ENCODE measurements at regions of chr17 and their contacts with region 1.

Region 1: GRCh38 chr17:21275579-21276263 is 8.8 kb upstream of the MAP2K3 start:
- DNase-seq: peak; percentile 85 to 93 (median 87)
- H3K4me3 ChIP-seq: peak overlapping the region; percentile 26 to 71
- H3K4me3 Mint-ChIP-seq: peak overlapping the region; percentile 86 to 99 (median 90)
- H3K27ac ChIP-seq: peak overlapping the region; percentile 77
- H3K27ac Mint-ChIP-seq: peak overlapping the region; percentile 78 to 95 (median 93)
- H3K4me1 ChIP-seq: peaks cover 49% of the 10 kb centered on the region
- H3K4me1 Mint-ChIP-seq: peaks cover 32 to 52% (median 39%) of the 10 kb centered on the region in 4 donors
- H3K27me3 ChIP-seq: no peaks in the 10 kb centered on the region
- H3K27me3 Mint-ChIP-seq: no peaks in the 10 kb centered on the region

Region 2: DNA sequence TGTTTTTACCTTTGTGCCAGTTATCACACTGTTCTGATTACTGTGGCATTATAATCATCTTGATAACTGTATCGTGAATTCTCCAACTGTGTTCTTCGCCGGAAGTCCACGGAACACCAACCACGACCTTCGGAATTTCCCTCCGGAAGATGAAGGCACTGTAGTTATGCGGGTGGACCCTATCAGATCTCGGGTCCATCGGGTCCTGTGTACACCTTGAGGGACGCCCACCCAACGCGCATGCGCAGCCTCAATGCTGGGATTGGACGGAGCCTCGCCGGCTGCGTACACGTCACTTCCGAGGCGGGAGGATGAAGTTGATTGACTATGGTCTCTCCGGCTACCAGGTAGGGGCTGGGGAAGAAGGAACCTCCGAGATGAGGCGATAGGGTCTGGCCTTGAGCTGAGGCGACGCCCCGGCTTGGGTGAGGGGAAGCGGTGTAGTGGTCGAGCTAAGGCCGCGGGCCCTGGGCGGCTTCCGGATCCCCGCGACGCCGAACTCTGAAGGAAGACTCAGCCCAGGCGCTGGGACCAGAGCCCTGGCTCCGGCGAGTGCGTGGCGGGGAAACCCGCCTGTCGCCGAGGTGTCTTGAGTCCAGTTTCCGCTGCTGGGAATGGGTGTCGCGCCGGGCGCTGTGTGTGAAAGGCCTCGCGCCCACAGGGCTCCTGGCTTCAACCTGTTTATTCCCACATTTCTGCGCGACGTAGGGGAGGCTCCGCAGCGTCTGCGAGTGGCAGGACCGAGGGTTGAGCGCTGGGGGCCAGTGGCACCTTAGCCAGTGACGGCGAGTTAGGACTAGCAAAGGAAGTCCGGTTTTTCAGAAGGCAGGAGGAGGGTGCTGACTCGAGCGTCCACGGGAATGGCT is 148.8 kb before region 1 on chr17 and contains the start of gene DHRS7B:
- CTCF ChIA-PET with region 1: interaction called, 69 read pairs
- POLR2A ChIA-PET with region 1: interaction called, 3 read pairs
- intact Hi-C with region 1: loop called (anchors 1 kb)
- DNase-seq: peak; percentile 94 to 97 (median 94)
- H3K4me3 ChIP-seq: peak within 1 kb of the TSS; percentile 31 to 97
- H3K4me3 Mint-ChIP-seq: peak within 1 kb of the TSS; percentile 91 to 98 (median 96)
- H3K27ac ChIP-seq: peak within 1 kb of the TSS; percentile 85
- H3K27ac Mint-ChIP-seq: peak within 1 kb of the TSS; percentile 95 to 99 (median 97)
- H3K4me1 ChIP-seq: peaks cover 27% of the 10 kb centered on the region
- H3K4me1 Mint-ChIP-seq: peaks cover 20 to 42% (median 35%) of the 10 kb centered on the region in 4 donors
- H3K27me3 ChIP-seq: no peaks in the 10 kb centered on the region
- H3K27me3 Mint-ChIP-seq: no peaks in the 10 kb centered on the region
- total RNA-seq, gene DHRS7B: 8.2 to 9.5 TPM

Region 3: GRCh38 chr17:21161498-21162393 is 114.0 kb before region 1 on chr17:
- CTCF ChIA-PET with region 1: no interaction called
- POLR2A ChIA-PET with region 1: no interaction called
- intact Hi-C with region 1: no loop called
- DNase-seq: no peak
- H3K4me3 ChIP-seq: no peak overlapping the region
- H3K4me3 Mint-ChIP-seq: no peak overlapping the region
- H3K27ac ChIP-seq: no peak overlapping the region
- H3K27ac Mint-ChIP-seq: peak overlapping the region in 1 of 7 donors; percentile 69
- H3K4me1 ChIP-seq: no peaks in the 10 kb centered on the region
- H3K4me1 Mint-ChIP-seq: peaks cover 0 to 12% (median 4%) of the 10 kb centered on the region in 4 donors
- H3K27me3 ChIP-seq: no peaks in the 10 kb centered on the region
- H3K27me3 Mint-ChIP-seq: no peaks in the 10 kb centered on the region

Region 4: GRCh38 chr17:21214015-21214776 is 61.5 kb before region 1 on chr17 and contains the start of gene TMEM11:
- CTCF ChIA-PET with region 1: interaction called, 13 read pairs
- POLR2A ChIA-PET with region 1: interaction called, 17 read pairs
- intact Hi-C with region 1: loop called (anchors 1 kb)
- DNase-seq: peak; percentile 94 to 96 (median 95)
- H3K4me3 ChIP-seq: peak within 1 kb of the TSS; percentile 64 to 94
- H3K4me3 Mint-ChIP-seq: peak within 1 kb of the TSS; percentile 89 to 97 (median 92)
- H3K27ac ChIP-seq: peak within 1 kb of the TSS; percentile 92
- H3K27ac Mint-ChIP-seq: peak within 1 kb of the TSS; percentile 82 to 96 (median 93)
- H3K4me1 ChIP-seq: peaks cover 39% of the 10 kb centered on the region
- H3K4me1 Mint-ChIP-seq: peaks cover 31 to 64% (median 47%) of the 10 kb centered on the region in 4 donors
- H3K27me3 ChIP-seq: no peaks in the 10 kb centered on the region
- H3K27me3 Mint-ChIP-seq: no peaks in the 10 kb centered on the region
- total RNA-seq, gene TMEM11: 18.6 to 21.7 TPM

Region 5: DNA sequence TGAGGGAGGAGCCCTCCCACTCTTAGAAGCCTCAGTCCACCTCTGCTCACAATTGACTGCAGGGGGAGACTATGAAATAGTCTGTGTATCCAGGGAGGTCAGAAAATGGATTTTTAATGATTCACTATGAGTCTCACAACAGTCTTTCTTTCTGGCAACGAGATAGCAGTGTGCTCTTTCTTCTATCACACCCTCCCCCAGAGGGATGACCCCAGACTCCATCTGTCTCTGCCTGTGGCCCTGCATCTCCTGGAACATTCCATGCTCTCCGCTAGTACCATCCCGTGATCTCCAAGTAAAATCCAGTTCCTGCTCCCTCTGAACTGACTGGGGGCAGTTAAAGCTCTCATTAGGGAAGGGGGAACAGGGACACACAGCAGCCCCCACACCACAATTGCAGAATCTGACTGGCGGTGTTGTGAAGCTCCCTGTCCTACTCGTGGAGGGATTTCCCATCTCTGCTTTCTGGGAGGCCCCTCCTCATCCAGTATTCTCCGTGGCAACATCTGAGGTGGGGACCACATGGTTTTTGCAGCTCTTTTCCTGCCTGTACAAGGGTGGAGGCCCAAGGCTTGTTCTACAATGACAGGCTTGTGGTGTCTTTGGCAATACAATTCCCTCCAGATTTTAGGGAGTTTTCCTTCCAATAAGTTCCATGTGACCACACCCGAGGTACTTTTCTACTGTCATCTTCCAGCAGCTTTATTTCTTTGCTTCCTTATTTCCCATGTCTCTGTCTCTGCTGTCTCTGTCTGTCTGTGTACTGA is 42.0 kb before region 1 on chr17:
- CTCF ChIA-PET with region 1: no interaction called
- POLR2A ChIA-PET with region 1: no interaction called
- intact Hi-C with region 1: no loop called
- DNase-seq: no peak
- H3K4me3 ChIP-seq: no peak overlapping the region
- H3K4me3 Mint-ChIP-seq: peak overlapping the region in 1 of 8 donors; percentile 45
- H3K27ac ChIP-seq: no peak overlapping the region
- H3K27ac Mint-ChIP-seq: peak overlapping the region in 1 of 7 donors; percentile 73
- H3K4me1 ChIP-seq: no peaks in the 10 kb centered on the region
- H3K4me1 Mint-ChIP-seq: peaks cover 0 to 1% (median 0%) of the 10 kb centered on the region in 4 donors
- H3K27me3 ChIP-seq: no peaks in the 10 kb centered on the region
- H3K27me3 Mint-ChIP-seq: no peaks in the 10 kb centered on the region

Region 6: GRCh38 chr17:21252796-21253645 is 22.7 kb before region 1 on chr17 and contains the start of gene NATD1:
- CTCF ChIA-PET with region 1: interaction called, 25 read pairs
- POLR2A ChIA-PET with region 1: interaction called, 48 read pairs
- intact Hi-C with region 1: loop called (anchors 1 kb)
- DNase-seq: peak; percentile 74 to 86 (median 80)
- H3K4me3 ChIP-seq: peak within 1 kb of the TSS; percentile 38 to 71
- H3K4me3 Mint-ChIP-seq: peak within 1 kb of the TSS; percentile 88 to 95 (median 90)
- H3K27ac ChIP-seq: peak within 1 kb of the TSS; percentile 62
- H3K27ac Mint-ChIP-seq: peak within 1 kb of the TSS; percentile 90 to 95 (median 91)
- H3K4me1 ChIP-seq: peaks cover 27% of the 10 kb centered on the region
- H3K4me1 Mint-ChIP-seq: peaks cover 24 to 59% (median 34%) of the 10 kb centered on the region in 4 donors
- H3K27me3 ChIP-seq: no peaks in the 10 kb centered on the region
- H3K27me3 Mint-ChIP-seq: no peaks in the 10 kb centered on the region
- total RNA-seq, gene NATD1: 13.1 to 13.5 TPM

Region 7: GRCh38 chr17:21263351-21263750 is 12.4 kb before region 1 on chr17:
- CTCF ChIA-PET with region 1: interaction called, 24 read pairs
- POLR2A ChIA-PET with region 1: interaction called, 10 read pairs
- intact Hi-C with region 1: no loop called
- DNase-seq: no peak
- H3K4me3 ChIP-seq: no peak overlapping the region
- H3K4me3 Mint-ChIP-seq: no peak overlapping the region
- H3K27ac ChIP-seq: no peak overlapping the region
- H3K27ac Mint-ChIP-seq: peak overlapping the region in 1 of 7 donors; percentile 4
- H3K4me1 ChIP-seq: peaks cover 17% of the 10 kb centered on the region
- H3K4me1 Mint-ChIP-seq: peaks cover 8 to 27% (median 14%) of the 10 kb centered on the region in 4 donors
- H3K27me3 ChIP-seq: no peaks in the 10 kb centered on the region
- H3K27me3 Mint-ChIP-seq: peaks cover 0 to 3% of the 10 kb centered on the region in 2 donors

Region 8: DNA sequence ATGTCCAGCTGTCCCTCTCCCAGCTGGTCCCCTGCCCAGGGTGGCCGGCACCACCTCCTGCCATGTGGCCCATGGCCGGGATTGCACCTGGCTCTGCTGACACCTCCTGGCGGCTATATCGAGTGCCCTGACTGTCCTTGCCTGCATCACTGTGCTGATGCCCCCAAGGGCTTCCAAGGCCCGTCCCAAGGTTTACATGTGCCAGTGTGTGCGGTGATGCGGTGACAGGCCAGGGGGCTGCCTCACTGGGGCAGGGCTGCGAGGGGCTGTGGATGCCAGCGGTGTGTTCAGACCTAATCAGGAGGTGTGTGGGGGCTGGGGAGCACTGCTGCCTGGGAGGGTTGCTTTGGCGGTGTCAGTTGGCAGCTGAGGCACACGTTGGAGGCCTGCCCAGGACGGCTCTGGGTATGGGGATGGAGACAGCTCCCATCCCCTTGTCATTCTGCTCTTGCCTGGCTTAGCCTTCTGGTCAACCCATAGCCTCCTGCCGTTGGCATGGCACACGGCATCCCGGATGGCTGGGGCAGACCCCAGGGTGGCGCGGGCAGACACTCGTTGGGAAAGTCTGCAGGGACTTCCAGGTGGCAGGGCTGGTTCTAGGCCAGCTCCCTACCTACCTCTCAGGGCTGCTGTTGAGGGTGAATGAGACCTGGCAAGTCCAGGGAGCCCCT is 14.3 kb after region 1 on chr17:
- CTCF ChIA-PET with region 1: interaction called, 56 read pairs
- POLR2A ChIA-PET with region 1: interaction called, 59 read pairs
- intact Hi-C with region 1: loop called (anchors 1 kb)
- DNase-seq: peak in 1 of 5 donors; percentile 31
- H3K4me3 ChIP-seq: no peak overlapping the region
- H3K4me3 Mint-ChIP-seq: no peak overlapping the region
- H3K27ac ChIP-seq: peak overlapping the region; percentile 94
- H3K27ac Mint-ChIP-seq: peak overlapping the region; percentile 24 to 99 (median 59)
- H3K4me1 ChIP-seq: peaks cover 56% of the 10 kb centered on the region
- H3K4me1 Mint-ChIP-seq: peaks cover 35 to 74% (median 54%) of the 10 kb centered on the region in 4 donors
- H3K27me3 ChIP-seq: no peaks in the 10 kb centered on the region
- H3K27me3 Mint-ChIP-seq: peaks cover 0 to 4% of the 10 kb centered on the region in 2 donors

Measured in CD4-positive, alpha-beta memory T cell (primary cell).